WTC11 (cell line): ENCODE measurements at regions of chr1 and their contacts with region 1.

Region 1: DNA sequence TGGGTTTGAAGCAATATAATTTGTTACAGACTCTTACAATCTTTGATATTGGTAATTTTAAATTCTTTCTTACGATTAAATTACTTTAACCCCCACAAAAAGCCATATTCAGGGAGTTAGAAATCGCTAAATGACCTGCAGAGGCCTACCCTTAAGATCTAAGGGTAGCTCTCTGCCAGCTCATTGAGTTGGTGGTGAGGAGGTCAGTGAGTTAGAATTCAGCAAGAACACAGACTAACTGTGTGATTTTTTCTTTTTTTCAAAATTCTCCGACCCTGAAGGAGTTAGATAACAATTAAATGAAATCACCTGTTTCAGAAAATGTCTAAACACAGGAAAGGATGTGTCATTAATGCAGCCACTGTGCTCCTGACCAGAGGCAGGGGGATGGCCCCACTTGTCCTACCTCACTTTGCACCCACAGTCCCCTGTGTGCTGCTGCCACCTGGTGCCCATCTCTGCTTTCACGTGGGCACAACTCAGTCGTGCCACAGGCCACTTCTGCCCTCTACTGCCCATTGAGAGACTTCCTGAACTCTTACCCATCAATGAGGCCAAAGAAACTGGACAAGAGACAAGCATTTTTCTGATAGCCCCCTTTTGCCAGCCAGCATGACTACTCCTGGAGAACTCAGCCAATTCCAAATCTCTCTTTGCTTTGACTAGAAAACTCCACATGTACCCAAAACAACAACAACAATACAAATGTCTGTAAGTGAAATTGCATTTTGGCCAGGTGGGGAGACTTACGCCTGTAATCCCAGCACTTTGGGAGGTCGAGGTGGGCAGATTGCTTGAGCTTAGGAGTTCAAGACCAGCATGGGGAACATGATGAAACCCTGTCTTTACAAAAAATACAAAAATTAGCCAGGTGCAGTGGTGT is 8.4 kb downstream of the CFAP45 start:
- DNase-seq: peak; percentile 82
- ATAC-seq: peak; percentile 93
- H3K4me3 Mint-ChIP-seq: no peak overlapping the region
- H3K27ac Mint-ChIP-seq: no peak overlapping the region
- H3K4me1 Mint-ChIP-seq: peaks cover 9% of the 10 kb centered on the region
- H3K27me3 Mint-ChIP-seq: peaks cover 2% of the 10 kb centered on the region; the same call in 1 of the 2 replicates
- CTCF ChIP-seq: peak; percentile 79

Region 2: GRCh38 chr1:159790237-159790917 is 101.1 kb before region 1 on chr1:
- CTCF ChIA-PET with region 1: interaction called, 14 read pairs
- POLR2A ChIA-PET with region 1: no interaction called
- DNase-seq: peak; percentile 24
- ATAC-seq: peak; percentile 86
- H3K4me3 Mint-ChIP-seq: no peak overlapping the region
- H3K27ac Mint-ChIP-seq: no peak overlapping the region
- H3K4me1 Mint-ChIP-seq: 0 out of 2 replicates have a peak, but pooled peaks cover under 1% of the 10 kb centered on the region
- H3K27me3 Mint-ChIP-seq: no peaks in the 10 kb centered on the region; the same call in 1 of the 2 replicates
- CTCF ChIP-seq: peak; percentile 77

Region 3: DNA sequence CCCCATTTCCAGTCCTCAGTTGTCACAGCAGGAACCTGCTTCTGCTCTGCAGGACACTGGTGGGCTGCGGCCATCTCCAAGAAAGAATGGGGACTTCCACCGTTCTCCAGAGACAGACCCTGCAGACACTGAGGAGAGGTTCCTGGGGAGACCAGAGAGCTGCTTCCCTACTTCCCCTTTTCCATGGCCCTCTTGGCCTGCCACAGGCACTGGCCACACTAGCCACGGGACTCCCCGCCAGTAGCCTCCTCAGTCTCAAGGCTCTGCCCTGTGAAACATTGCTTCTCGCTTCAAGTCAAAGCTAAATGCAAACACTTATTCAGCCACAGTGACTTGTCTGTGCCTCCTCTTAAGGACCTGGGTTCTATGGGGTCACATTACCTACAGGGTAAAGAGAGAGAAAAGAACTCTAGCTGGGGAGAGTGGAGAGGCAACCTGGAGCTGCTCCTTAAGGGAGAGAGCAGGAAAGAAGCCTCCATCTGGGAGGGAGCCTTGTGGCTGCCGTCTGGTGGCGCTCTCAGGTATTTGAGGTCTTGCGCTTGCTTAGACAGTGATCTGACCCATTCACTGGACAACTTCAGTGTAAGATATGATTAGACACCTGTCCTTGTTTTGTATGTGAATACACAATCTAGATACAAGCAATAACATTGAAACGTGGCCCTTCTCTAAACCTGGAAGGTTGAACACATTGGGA is 70.2 kb before region 1 on chr1:
- CTCF ChIA-PET with region 1: interaction called, 11 read pairs
- POLR2A ChIA-PET with region 1: no interaction called
- DNase-seq: peak; percentile 25
- ATAC-seq: peak; percentile 68
- H3K4me3 Mint-ChIP-seq: no peak overlapping the region
- H3K27ac Mint-ChIP-seq: no peak overlapping the region
- H3K4me1 Mint-ChIP-seq: peaks cover 15% of the 10 kb centered on the region
- H3K27me3 Mint-ChIP-seq: peaks cover 11% of the 10 kb centered on the region
- CTCF ChIP-seq: no peak

Region 4: GRCh38 chr1:159839116-159839849 is 52.2 kb before region 1 on chr1:
- CTCF ChIA-PET with region 1: interaction called, 11 read pairs
- POLR2A ChIA-PET with region 1: no interaction called
- DNase-seq: no peak
- ATAC-seq: no peak
- H3K4me3 Mint-ChIP-seq: no peak overlapping the region
- H3K27ac Mint-ChIP-seq: no peak overlapping the region
- H3K4me1 Mint-ChIP-seq: peaks cover 9% of the 10 kb centered on the region
- H3K27me3 Mint-ChIP-seq: no peaks in the 10 kb centered on the region; the same call in 1 of the 2 replicates
- CTCF ChIP-seq: no peak

Region 5: DNA sequence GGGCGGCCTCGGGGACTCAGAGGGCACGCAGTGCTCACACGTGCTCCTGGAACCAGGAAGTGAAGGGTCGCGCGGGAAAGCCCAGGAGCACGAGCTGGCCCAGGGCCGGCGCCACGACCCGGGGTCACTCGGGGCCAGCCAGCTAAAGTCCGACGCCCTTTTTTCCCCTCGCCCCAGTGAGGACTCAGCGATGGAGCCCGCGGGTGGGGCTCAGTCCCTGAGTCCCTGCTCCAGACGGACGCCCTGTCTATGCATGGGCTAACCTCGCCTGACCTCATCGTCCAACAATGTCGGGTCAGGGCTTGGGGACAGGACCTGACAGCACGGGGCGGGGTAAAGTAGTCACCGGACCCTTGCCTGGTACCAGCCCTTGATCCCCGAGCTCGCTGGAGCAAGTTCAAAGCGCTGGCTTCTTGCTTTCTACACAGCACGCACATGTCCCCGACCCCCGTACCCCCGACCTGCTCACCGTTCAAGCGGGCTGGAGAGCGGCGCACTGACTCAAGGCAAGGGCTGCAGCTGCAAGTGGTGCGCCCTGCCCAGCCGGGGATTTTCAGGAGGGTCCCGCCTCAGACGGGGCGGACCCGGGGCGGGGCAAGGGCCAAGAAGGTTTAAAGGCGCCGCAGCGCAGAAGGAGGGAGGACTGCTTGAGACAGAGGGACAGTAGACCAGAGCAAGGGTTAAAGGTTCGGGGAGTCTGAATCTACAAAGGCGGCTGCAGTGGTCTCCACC is 33.6 kb after region 1 on chr1 and contains the start of gene TAGLN2:
- CTCF ChIA-PET with region 1: interaction called, 17 read pairs
- POLR2A ChIA-PET with region 1: interaction called, 3 read pairs
- DNase-seq: peak; percentile 88
- ATAC-seq: peak; percentile 80
- H3K4me3 Mint-ChIP-seq: peak within 1 kb of the TSS; percentile 85
- H3K27ac Mint-ChIP-seq: no peak within 1 kb of the TSS
- H3K4me1 Mint-ChIP-seq: peaks cover 37% of the 10 kb centered on the region
- H3K27me3 Mint-ChIP-seq: peaks cover 18% of the 10 kb centered on the region
- CTCF ChIP-seq: no peak
- total RNA-seq, gene TAGLN2: 66.9 to 75.3 TPM (median 73.3 TPM) in 3 replicates